Gastrocnemius medialis (tissue), 4 donors: ENCODE measurements at regions of chr2 and their contacts with region 1.

Region 1: GRCh38 chr2:71742953-71743601 is 289.7 kb downstream of the DYSF start:
- DNase-seq: peak; percentile 81 to 93
- ATAC-seq: peak; percentile 87 to 89
- H3K4me3 ChIP-seq: no peak overlapping the region
- H3K27ac ChIP-seq: peak overlapping the region; percentile 69 to 84 (median 76)
- H3K4me1 ChIP-seq: peaks cover 50 to 54% of the 10 kb centered on the region in 2 donors
- H3K27me3 ChIP-seq: no peaks in the 10 kb centered on the region
- CTCF ChIP-seq: no peak
- POLR2A ChIP-seq: peak in 1 of 2 donors; percentile 14

Region 2: DNA sequence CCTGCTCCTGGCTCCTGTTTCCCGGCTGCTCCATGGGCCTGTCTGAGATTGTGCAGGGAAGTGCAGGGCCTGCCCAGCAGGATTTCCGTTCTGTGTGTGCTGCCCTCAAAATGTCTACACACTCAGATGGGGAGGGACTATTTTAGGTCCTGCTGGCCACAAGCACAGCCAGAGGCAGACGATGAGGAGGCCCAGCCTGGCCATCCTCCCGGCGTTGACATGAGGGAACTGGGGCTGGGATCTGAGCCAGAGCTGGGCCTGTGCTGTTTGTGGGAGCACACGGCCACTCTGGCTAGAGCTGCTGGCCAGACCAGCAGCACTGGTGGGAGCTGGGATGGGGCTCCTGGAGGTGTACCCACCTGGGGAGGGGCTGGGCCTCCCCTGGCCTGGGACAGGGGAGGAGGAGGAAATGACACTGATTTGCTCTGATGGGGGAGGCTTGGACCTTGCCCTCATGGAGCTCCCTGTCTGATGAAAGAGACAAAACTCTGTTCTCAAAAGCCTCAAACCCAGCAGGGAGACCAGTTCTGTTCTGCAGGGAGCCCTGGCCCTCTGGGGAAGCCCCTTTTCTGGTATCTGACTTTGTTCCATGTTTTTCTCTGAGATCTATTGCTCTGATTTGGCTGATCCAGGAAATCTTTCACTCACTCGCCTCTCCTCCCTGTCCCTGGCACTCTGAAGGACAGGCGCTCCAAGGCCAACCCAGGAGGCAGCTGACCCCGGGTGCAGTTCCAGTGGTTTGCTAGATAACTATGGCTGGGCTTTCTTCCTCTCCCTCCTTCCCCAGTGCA is 127.9 kb before region 1 on chr2:
- in situ Hi-C with region 1: no loop called
- intact Hi-C with region 1: loop called (anchors 2 kb)
- DNase-seq: peak; percentile 61 to 82
- ATAC-seq: peak; percentile 74 to 79
- H3K4me3 ChIP-seq: no peak overlapping the region
- H3K27ac ChIP-seq: peak overlapping the region; percentile 80 to 87 (median 86)
- H3K4me1 ChIP-seq: peaks cover 33 to 42% of the 10 kb centered on the region in 2 donors
- H3K27me3 ChIP-seq: no peaks in the 10 kb centered on the region
- CTCF ChIP-seq: no peak
- POLR2A ChIP-seq: peak in 1 of 2 donors; percentile 33

Region 3: DNA sequence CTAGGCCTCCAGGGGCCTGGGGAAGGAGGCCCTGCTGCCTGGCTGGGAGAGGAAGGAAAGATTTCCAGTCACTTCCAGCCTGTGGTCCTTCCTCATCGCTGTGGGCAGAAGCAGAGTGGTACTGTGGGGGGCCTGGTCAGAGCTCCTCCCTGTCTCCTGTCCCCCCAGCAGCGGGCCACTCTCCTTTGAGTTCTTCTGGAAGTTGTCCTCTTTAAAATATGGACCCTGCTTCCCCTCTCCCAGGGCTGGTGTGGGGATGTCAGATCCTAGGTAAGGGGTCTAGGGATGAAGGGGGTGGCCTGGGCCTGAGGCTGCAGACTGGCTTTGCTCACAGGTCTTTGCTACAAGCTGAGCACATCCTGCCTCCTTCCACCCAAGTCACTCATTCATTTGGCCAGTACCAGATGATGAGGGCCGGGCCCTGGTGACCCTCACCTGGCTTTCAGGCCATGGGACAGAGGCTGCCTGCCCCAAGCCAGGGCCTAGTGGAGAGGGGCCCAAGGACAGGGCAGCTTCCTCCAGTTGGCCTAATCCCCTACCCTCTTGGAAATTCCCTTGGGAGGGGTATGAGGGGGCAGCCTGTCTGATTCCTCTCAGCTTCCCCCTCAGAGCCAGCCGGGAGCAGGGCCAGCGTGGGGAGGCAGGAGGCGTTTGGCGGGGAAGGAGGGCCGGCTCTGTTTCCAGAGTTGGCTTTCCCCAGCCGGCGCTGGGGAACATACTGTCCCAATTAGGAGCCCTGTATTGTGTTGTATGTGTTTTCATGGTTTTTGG is 57.8 kb before region 1 on chr2:
- in situ Hi-C with region 1: no loop called
- intact Hi-C with region 1: loop called (anchors 2 kb)
- DNase-seq: peak; percentile 78 to 89
- ATAC-seq: peak; percentile 68 to 79
- H3K4me3 ChIP-seq: no peak overlapping the region
- H3K27ac ChIP-seq: peak overlapping the region; percentile 86 to 92 (median 89)
- H3K4me1 ChIP-seq: peaks cover 34 to 56% of the 10 kb centered on the region in 2 donors
- H3K27me3 ChIP-seq: no peaks in the 10 kb centered on the region
- CTCF ChIP-seq: no peak
- POLR2A ChIP-seq: peak in 1 of 2 donors; percentile 32

Region 4: GRCh38 chr2:71697106-71698004 is 45.7 kb before region 1 on chr2:
- in situ Hi-C with region 1: no loop called
- intact Hi-C with region 1: loop called (anchors 2 kb)
- DNase-seq: peak in 1 of 2 donors; percentile 12
- ATAC-seq: no peak
- H3K4me3 ChIP-seq: no peak overlapping the region
- H3K27ac ChIP-seq: no peak overlapping the region
- H3K4me1 ChIP-seq: peaks cover 35 to 50% of the 10 kb centered on the region in 2 donors
- H3K27me3 ChIP-seq: no peaks in the 10 kb centered on the region
- CTCF ChIP-seq: no peak
- POLR2A ChIP-seq: no peak

Region 5: GRCh38 chr2:71943238-71944182 is 200.4 kb after region 1 on chr2:
- in situ Hi-C with region 1: no loop called
- intact Hi-C with region 1: loop called (anchors 5 kb)
- DNase-seq: peak; percentile 38 to 64
- ATAC-seq: peak; percentile 9 to 16
- H3K4me3 ChIP-seq: no peak overlapping the region
- H3K27ac ChIP-seq: peak overlapping the region; percentile 49 to 92 (median 74)
- H3K4me1 ChIP-seq: peaks cover 41 to 49% of the 10 kb centered on the region in 2 donors
- H3K27me3 ChIP-seq: no peaks in the 10 kb centered on the region
- CTCF ChIP-seq: no peak
- POLR2A ChIP-seq: no peak